ENCODE measurements at regions of chr19 and their contacts with region 1.

Region 1: DNA sequence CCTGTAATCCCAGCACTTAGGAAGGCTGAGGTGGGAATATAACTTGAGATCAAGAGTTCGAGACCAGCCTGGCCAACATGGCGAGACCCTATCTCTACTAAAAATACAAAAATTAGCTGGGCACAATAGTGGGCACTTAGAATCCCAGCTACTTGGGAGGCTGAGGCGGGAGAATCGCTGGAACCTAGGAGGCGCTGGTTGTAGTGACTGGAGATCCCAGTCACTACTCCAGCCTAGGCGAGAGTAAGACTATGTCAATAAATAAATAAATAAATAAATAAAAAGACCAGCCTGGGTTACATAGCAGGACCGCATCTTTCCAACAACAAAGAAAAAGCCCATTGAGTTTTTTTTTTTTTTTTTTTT is 2.1 kb upstream of the DOT1L start:
- DNase-seq: no peak
- ATAC-seq: no peak
- H3K4me3 Mint-ChIP-seq: no peak overlapping the region
- H3K27ac Mint-ChIP-seq: no peak overlapping the region
- H3K4me1 Mint-ChIP-seq: peaks cover 10% of the 10 kb centered on the region
- H3K27me3 Mint-ChIP-seq: no peaks in the 10 kb centered on the region

Region 2: DNA sequence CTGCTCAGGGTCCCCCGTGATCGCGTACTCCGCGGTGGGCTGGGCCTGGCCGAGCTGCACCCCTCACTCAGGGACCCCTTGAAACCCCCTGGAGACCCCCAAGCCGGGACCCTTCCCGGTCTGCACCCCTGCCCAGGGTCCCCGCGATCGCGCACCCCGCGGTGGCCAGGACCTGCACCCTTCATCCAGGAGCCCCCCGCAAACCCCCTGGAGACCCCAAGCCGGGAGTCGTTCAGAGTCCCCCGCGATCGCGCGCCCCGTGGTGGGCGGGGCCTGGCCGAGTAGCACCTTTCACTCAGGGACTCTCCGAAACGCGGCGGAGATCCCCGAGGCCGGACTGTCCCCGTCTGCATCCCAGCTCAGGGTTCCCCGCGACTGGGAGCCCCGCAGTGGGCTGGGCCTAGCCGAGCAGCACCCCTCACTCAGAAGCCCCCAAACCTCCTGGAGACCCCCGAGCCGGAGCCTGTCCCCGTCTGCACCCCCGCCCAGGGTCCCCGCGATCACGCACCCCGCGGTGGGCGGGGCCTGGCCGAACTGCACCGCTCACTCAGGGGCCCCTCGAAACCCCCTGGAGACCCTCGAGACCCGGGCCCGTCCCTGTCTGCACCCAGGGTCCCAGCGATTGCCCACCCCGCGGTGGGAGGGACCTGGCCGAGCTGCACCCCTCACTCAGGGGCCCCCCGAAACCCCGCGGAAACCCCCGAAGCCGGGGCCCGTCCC is 294.3 kb after region 1 on chr19:
- CTCF ChIA-PET with region 1: no interaction called
- POLR2A ChIA-PET with region 1: no interaction called
- intact Hi-C with region 1: loop called in 1 of 2 experiments (anchors 2 kb)
- DNase-seq: peak; percentile 73
- ATAC-seq: peak; percentile 47
- H3K4me3 Mint-ChIP-seq: peak overlapping the region; percentile 84
- H3K27ac Mint-ChIP-seq: peak overlapping the region; percentile 88
- H3K4me1 Mint-ChIP-seq: peaks cover 16% of the 10 kb centered on the region
- H3K27me3 Mint-ChIP-seq: no peaks in the 10 kb centered on the region